CD8-positive, alpha-beta T cell (primary cell): ENCODE measurements at regions of chr1 and their contacts with region 1.

Region 1: GRCh38 chr1:48498096-48498791 is 26.2 kb upstream of the SPATA6 start:
- DNase-seq: peak; percentile 28 to 76 (median 65)
- ATAC-seq: peak; percentile 75
- H3K4me3 ChIP-seq: no peak overlapping the region
- H3K4me3 Mint-ChIP-seq: peak overlapping the region; percentile 20
- H3K27ac ChIP-seq: no peak overlapping the region
- H3K27ac Mint-ChIP-seq: no peak overlapping the region
- H3K4me1 ChIP-seq: peaks cover 4% of the 10 kb centered on the region
- H3K4me1 Mint-ChIP-seq: peaks cover 4% of the 10 kb centered on the region
- H3K27me3 ChIP-seq: no peaks in the 10 kb centered on the region
- H3K27me3 Mint-ChIP-seq: no peaks in the 10 kb centered on the region
- CTCF ChIP-seq: peak; percentile 89

Region 2: GRCh38 chr1:48202030-48202752 is 296.1 kb before region 1 on chr1:
- CTCF ChIA-PET with region 1: no interaction called
- POLR2A ChIA-PET with region 1: no interaction called
- intact Hi-C with region 1: loop called in 1 of 2 experiments (anchors 1 kb)
- DNase-seq: peak; percentile 18 to 67 (median 53)
- ATAC-seq: no peak
- H3K4me3 ChIP-seq: no peak overlapping the region
- H3K4me3 Mint-ChIP-seq: no peak overlapping the region
- H3K27ac ChIP-seq: no peak overlapping the region
- H3K27ac Mint-ChIP-seq: no peak overlapping the region
- H3K4me1 ChIP-seq: no peaks in the 10 kb centered on the region
- H3K4me1 Mint-ChIP-seq: no peaks in the 10 kb centered on the region
- H3K27me3 ChIP-seq: no peaks in the 10 kb centered on the region
- H3K27me3 Mint-ChIP-seq: peaks cover 7% of the 10 kb centered on the region
- CTCF ChIP-seq: peak; percentile 95

Region 3: DNA sequence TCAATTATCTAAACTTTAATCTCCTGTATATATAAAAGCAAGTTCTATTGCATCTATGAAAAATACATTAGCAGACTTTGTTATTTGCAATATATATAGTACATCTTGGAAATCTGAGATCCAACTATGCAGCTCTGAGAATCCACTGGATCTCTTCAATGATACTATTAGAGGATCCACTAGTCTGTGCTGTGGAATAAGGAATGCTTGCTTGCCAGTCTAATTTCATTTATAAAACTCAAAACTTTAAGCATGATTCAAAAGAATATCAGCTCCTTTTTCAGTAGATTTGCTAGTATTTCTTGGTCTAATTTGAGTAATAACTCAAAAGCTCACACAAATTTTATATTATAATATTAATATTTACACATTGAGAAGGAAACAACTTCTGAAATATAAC is 141.3 kb before region 1 on chr1:
- CTCF ChIA-PET with region 1: no interaction called
- POLR2A ChIA-PET with region 1: no interaction called
- intact Hi-C with region 1: loop called in 1 of 2 experiments (anchors 5 kb)
- DNase-seq: no peak
- ATAC-seq: no peak
- H3K4me3 ChIP-seq: no peak overlapping the region
- H3K4me3 Mint-ChIP-seq: no peak overlapping the region
- H3K27ac ChIP-seq: no peak overlapping the region
- H3K27ac Mint-ChIP-seq: no peak overlapping the region
- H3K4me1 ChIP-seq: no peaks in the 10 kb centered on the region
- H3K4me1 Mint-ChIP-seq: no peaks in the 10 kb centered on the region
- H3K27me3 ChIP-seq: no peaks in the 10 kb centered on the region
- H3K27me3 Mint-ChIP-seq: no peaks in the 10 kb centered on the region
- CTCF ChIP-seq: no peak